ENCODE measurements at regions of chr11 and their contacts with region 1.

Region 1: GRCh38 chr11:64269380-64270234 is 14.9 kb downstream of the BAD start:
- DNase-seq: peak; percentile 99
- H3K4me3 ChIP-seq: peak overlapping the region; percentile 70 to 81 (median 78)
- H3K27ac ChIP-seq: peak overlapping the region; percentile 91 to 98 (median 96)
- H3K4me1 ChIP-seq: peaks cover 34 to 37% (median 36%) of the 10 kb centered on the region in 4 donors
- H3K27me3 ChIP-seq: no peaks in the 10 kb centered on the region
- CTCF ChIP-seq: peak in 1 of 3 experiments; percentile 35
- EP300 ChIP-seq: no peak
- POLR2A ChIP-seq: peak; percentile 4

Region 2: GRCh38 chr11:64304316-64305072 is 34.9 kb after region 1 on chr11:
- intact Hi-C with region 1: loop called (anchors 5 kb)
- DNase-seq: peak; percentile 98
- H3K4me3 ChIP-seq: peak overlapping the region; percentile 69 to 84 (median 78)
- H3K27ac ChIP-seq: peak overlapping the region; percentile 86 to 98 (median 92)
- H3K4me1 ChIP-seq: peaks cover 31 to 61% (median 58%) of the 10 kb centered on the region in 4 donors
- H3K27me3 ChIP-seq: peaks cover 0 to 39% (median 16%) of the 10 kb centered on the region in 4 donors
- CTCF ChIP-seq: peak; percentile 82 to 88 (median 88)
- EP300 ChIP-seq: no peak
- POLR2A ChIP-seq: no peak

Measured in esophagus muscularis mucosa (tissue), 4 donors.